Head of caudate nucleus (tissue), 42 donors: ENCODE measurements at regions of chr4 and their contacts with region 1.

Region 1: GRCh38 chr4:26330186-26330787 is 9.5 kb downstream of the RBPJ start:
- DNase-seq: peak in 7 of 42 donors; percentile 39 to 65 (median 52)

Region 2: GRCh38 chr4:25966171-25966570 is 364.1 kb before region 1 on chr4:
- intact Hi-C with region 1: no loop called
- DNase-seq: no peak

Region 3: DNA sequence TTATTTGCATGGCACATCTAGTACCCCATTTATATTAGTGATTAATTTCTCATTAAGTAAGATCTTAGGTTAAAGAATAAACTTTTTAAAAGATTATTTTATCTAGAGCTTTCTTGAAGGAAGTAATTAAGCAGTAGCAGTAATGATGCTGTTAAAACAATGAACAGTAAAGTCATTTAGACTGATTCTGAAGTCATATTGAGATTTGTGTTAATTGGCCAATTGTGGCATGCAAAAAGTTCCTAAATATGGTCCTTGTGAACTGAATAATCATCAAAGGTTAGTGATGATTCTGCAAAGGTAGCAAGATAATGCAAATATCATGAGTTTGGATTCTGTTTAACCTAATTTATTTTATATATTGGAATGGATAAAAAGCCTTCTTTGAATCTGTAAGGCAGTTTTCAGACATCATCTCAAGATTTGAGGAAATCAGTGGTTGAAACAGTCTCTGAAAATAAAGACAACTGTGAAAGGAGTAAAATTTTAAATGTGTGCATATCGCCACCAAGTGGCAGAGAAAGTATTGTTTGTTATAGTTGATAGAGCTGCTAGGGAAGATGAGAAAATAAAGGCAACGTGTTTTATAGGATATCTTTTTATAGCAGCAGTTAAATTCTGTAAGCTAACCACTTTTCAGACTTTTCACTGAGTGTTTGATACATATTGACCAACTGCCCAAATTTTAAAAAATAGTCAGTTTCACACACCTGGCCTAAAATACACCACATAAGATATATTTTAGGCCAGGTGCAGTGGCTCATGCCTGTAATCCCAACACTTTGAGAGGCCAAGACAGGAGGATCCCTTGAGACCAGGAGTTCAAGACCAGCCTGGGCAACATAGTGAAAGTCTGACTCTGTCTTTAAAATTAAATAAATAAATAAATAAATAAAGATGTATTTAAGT is 80.4 kb after region 1 on chr4:
- intact Hi-C with region 1: loop called (anchors 2 kb)
- DNase-seq: peak in 18 of 42 donors; percentile 14 to 85 (median 56)